Activated T-helper 2 cell treated with anti-CD3 and anti-CD28 coated beads, Interferon-gamma antibody, Interleukin-2, Interleukin-4, amounts not matched to agents 10 μg/mL and 5 μg/mL and 100 μg/mL, durations not matched to agents 14 hours and 24 hours and 36 hours (primary cell): ENCODE measurements at regions of chr3 and their contacts with region 1.

Region 1: DNA sequence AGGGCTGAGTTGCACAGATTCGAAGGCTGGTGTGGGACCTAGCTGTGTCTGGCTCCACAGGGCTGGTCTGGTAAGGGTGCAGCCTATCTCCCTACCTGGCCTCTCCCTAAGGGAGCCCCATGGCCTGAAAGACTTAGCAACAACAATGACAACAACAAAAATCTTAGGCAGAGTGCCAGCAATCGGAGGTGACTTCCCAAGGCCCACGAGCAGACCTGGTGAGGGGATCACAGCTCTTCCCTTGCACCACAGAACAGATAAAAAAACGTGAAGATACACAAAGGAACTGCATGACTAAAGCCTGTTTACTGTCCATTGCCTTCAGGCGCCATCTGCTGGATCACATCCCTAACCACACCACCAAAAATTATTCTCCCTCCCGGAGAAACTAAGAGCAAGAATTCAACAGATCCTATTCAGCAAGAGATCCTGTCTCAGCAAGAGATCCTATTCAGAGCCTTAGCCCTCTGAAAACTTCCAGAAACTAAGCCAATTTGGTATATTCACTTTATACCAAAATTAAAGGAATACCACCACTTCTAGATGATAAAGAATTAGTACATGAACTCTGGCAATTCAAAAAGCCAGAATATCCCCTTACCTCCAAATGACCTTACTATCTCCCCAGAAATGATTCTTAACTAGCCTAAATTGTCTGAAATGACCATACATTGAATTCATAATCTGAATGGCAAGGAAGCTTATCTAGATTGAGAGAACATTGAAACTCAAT is 24.1 kb upstream of the OR5K4 start:
- DNase-seq: peak; percentile 26
- H3K4me3 Mint-ChIP-seq: no peak overlapping the region
- H3K27ac Mint-ChIP-seq: no peak overlapping the region
- H3K4me1 Mint-ChIP-seq: peaks cover 27% of the 10 kb centered on the region
- H3K27me3 Mint-ChIP-seq: peaks cover 34% of the 10 kb centered on the region

Region 2: DNA sequence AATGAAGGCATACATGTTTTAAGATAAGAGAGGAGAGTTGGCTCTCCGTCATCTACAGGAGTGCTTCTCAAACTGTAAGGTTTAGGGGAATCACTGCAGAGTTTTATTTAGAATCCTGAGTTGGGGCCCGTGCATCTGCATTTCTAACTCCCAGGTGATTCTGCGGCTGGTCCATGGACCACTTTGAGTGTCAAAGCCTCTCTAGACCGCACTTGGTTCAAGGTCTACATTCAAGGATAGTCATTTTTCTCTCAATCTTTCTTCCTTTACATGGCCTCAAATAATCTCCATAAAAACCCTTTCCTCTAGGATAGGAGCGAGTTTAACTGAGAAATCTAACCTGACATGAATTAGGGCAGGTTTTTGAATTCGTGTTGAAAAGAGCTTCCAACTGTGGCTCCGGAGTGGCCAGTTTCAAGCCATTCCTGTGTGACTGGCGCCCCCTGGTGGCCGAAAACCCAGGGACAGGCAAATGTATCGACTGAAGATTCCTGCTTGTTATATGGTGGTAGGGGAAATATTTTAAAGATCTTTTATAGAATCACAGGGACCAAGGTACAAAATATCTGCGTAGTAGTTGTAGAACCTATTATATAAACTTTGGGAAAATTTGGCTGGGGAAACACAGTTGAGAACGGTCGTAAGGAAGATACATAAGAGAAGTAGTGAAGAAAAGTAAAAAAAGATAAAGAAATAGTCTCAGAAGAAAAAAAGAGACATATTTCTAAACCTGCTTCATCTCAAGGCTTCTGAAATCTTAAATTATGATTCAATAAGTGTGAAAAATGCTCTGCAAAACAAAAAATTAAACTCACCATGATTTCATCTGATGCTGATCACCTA is 306.4 kb before region 1 on chr3:
- intact Hi-C with region 1: no loop called
- DNase-seq: peak; percentile 76
- H3K4me3 Mint-ChIP-seq: no peak overlapping the region
- H3K27ac Mint-ChIP-seq: no peak overlapping the region
- H3K4me1 Mint-ChIP-seq: peaks cover 10% of the 10 kb centered on the region
- H3K27me3 Mint-ChIP-seq: no peaks in the 10 kb centered on the region

Region 3: GRCh38 chr3:98188545-98188944 is 141.0 kb before region 1 on chr3:
- intact Hi-C with region 1: loop called (anchors 5 kb)
- DNase-seq: no peak
- H3K4me3 Mint-ChIP-seq: no peak overlapping the region
- H3K27ac Mint-ChIP-seq: no peak overlapping the region
- H3K4me1 Mint-ChIP-seq: peaks cover 4% of the 10 kb centered on the region
- H3K27me3 Mint-ChIP-seq: peaks cover 12% of the 10 kb centered on the region

Region 4: DNA sequence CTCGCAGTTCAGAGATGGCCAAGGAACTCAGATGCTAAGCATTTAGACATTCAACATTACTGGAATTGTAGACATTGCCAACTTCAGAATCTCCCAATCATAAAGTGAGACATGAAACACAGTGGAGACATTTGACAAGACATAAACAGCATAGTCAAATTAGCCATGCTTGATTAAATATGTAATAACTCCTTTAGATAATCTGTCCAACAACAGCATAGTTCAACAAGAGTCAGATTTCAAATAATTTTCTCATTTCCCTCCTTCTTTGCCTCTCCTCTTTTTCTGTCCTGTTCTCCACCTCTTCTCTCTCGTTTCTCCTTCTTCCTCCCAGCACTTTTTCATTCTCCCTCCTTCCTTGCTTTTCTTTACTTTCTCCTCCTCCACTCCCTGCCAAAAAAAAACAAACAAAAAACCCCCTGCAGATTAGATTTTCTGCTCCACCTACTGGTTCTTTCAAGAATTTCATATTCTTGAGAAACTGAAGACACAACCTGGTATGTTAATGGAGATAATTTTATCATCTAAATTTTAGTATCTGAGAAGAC is 243.7 kb after region 1 on chr3:
- intact Hi-C with region 1: loop called (anchors 5 kb)
- DNase-seq: no peak
- H3K4me3 Mint-ChIP-seq: peak overlapping the region; percentile 47
- H3K27ac Mint-ChIP-seq: peak overlapping the region; percentile 71
- H3K4me1 Mint-ChIP-seq: peaks cover 57% of the 10 kb centered on the region
- H3K27me3 Mint-ChIP-seq: no peaks in the 10 kb centered on the region

Region 5: DNA sequence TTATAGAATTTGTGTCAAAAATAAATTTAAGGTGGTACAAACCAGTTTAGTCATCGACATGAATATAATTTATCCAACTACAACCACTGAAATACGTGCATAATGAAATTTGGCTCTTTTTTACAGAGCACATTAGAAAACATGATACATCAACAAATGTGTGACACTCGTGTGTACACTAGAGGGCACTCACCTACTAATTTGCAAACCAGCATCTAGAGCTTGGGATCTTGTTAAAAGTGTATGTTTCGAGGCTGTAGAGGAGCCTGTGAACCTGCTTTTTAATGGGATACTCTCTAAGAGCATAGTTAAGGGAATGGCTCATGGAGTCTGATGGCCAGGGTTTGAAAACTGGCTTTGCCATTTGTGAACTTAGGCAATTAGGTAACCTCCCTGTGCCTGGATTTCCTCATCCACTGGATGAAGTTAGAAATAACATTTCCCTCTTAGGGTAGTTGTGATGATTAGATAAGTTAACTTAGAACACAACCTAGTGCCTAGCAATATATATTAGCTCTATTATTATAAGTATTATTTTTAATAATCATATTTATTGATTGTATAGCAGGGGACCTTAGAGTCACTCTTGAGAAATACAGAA is 272.6 kb after region 1 on chr3:
- intact Hi-C with region 1: loop called (anchors 5 kb)
- DNase-seq: no peak
- H3K4me3 Mint-ChIP-seq: no peak overlapping the region
- H3K27ac Mint-ChIP-seq: no peak overlapping the region
- H3K4me1 Mint-ChIP-seq: peaks cover 8% of the 10 kb centered on the region
- H3K27me3 Mint-ChIP-seq: peaks cover 12% of the 10 kb centered on the region